ENCODE measurements at regions of chr10 and their contacts with region 1.

Region 1: DNA sequence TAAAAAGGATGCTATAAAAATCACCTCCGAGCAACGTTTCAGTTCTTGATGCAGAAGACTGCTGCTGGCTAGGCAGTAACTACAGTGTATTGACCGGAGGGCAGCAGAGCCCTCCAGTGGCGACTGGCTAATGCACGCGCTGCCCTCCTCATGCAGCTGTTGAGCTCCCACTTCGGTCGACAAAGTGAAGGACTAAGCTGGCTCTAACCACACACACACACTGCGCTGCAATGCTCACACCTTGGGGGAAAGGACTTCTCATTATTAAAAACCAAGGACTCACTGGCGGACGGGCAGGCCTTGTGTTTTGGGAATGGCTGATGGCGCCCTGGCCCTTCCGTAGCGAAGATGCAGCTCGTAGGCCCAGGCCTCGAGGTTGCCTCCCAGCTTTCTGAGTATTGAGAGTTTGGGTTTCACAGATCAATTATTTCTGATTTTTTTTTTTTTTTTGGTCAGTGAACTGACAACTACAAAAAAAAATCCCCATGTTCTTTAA is 120.9 kb upstream of the DIP2C start:
- DNase-seq: no peak
- H3K4me3 ChIP-seq: no peak overlapping the region
- H3K27ac ChIP-seq: no peak overlapping the region
- H3K4me1 ChIP-seq: no peaks in the 10 kb centered on the region
- H3K27me3 ChIP-seq: no peaks in the 10 kb centered on the region
- CTCF ChIP-seq: no peak

Region 2: GRCh38 chr10:306675-307185 is 503.7 kb before region 1 on chr10:
- CTCF ChIA-PET with region 1: interaction called, 16 read pairs
- POLR2A ChIA-PET with region 1: no interaction called
- intact Hi-C with region 1: no loop called
- DNase-seq: peak in 1 of 2 experiments; percentile 20
- H3K4me3 ChIP-seq: no peak overlapping the region
- H3K27ac ChIP-seq: no peak overlapping the region
- H3K4me1 ChIP-seq: no peaks in the 10 kb centered on the region
- H3K27me3 ChIP-seq: peaks cover 14% of the 10 kb centered on the region; the same call in 1 of the 2 replicates
- CTCF ChIP-seq: no peak

Region 3: DNA sequence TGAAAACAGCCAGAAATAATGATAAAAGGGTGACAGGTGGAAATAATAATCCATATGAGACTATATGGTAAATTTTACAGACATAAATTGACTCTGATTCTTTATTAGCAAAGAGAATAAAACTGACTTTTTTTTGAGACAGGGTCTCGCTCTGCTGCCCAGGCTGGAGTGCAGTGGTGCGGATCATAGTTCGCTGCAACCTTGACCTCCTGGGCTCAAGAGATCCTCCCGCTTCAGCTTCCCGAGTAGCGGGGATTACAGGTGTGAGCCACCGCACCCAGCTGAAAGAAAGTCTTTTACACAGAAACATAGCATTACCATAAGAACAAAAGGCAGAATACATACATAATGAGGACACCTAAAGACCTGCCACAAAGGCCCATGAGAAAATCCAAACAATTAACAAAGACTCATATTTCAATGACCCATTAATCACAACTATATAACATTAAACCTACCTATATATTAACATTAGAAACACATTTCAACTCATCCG is 69.4 kb before region 1 on chr10:
- CTCF ChIA-PET with region 1: no interaction called
- POLR2A ChIA-PET with region 1: no interaction called
- intact Hi-C with region 1: no loop called
- DNase-seq: no peak
- H3K4me3 ChIP-seq: no peak overlapping the region
- H3K27ac ChIP-seq: no peak overlapping the region
- H3K4me1 ChIP-seq: no peaks in the 10 kb centered on the region
- H3K27me3 ChIP-seq: peaks cover 38% of the 10 kb centered on the region
- CTCF ChIP-seq: no peak

Region 4: DNA sequence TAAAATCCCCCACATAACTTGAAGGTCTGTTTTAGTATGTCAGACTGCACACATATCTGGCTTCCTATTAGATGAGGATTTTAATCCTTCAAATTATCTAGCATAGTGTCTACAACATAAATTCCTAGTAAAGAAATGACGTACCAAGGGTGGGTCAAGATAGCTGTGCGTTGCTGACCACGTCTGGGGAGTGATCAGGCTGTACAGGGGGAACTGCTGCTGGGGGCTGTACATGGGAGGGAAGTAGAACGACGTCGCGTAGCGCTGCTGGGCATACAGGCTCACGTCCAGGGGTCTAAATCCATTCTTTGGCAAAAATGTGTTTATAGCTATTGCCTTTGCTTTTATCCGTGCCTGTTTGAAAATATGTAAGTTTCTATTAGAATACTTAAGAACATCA is 18.8 kb after region 1 on chr10:
- CTCF ChIA-PET with region 1: interaction called, 12 read pairs
- POLR2A ChIA-PET with region 1: no interaction called
- intact Hi-C with region 1: no loop called
- DNase-seq: no peak
- H3K4me3 ChIP-seq: no peak overlapping the region
- H3K27ac ChIP-seq: no peak overlapping the region
- H3K4me1 ChIP-seq: no peaks in the 10 kb centered on the region
- H3K27me3 ChIP-seq: no peaks in the 10 kb centered on the region
- CTCF ChIP-seq: no peak

Measured in PC-9 (cell line).